AG04449 (cell line): ENCODE measurements at regions of chr1 and their contacts with region 1.

Region 1: DNA sequence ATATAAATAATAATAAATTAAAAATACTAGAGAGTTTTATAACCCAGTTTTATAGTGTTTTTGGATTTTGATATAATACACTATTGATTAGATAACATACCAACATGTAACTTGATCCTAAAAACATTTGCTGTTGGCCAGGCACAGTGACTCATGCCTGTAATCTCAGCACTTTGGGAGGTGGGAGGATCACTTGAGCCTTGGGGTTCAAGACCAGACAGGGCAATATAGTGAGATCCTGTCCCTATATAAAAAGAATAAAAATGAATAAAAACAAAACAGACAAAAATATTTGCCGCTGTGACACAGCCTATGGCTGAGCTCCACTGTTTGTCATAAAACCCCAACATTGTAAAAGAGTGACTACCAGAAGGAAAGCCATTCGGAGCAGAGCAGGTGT is 26.1 kb downstream of the VPS13D start:
- DNase-seq: no peak
- H3K4me3 ChIP-seq: no peak overlapping the region
- CTCF ChIP-seq: no peak

Region 2: GRCh38 chr1:11907275-11908094 is 348.4 kb before region 1 on chr1:
- CTCF ChIA-PET with region 1: no interaction called
- POLR2A ChIA-PET with region 1: no interaction called
- DNase-seq: no peak
- H3K4me3 ChIP-seq: no peak overlapping the region; the same call in 1 of the 2 replicates
- CTCF ChIP-seq: peak; percentile 74

Region 3: DNA sequence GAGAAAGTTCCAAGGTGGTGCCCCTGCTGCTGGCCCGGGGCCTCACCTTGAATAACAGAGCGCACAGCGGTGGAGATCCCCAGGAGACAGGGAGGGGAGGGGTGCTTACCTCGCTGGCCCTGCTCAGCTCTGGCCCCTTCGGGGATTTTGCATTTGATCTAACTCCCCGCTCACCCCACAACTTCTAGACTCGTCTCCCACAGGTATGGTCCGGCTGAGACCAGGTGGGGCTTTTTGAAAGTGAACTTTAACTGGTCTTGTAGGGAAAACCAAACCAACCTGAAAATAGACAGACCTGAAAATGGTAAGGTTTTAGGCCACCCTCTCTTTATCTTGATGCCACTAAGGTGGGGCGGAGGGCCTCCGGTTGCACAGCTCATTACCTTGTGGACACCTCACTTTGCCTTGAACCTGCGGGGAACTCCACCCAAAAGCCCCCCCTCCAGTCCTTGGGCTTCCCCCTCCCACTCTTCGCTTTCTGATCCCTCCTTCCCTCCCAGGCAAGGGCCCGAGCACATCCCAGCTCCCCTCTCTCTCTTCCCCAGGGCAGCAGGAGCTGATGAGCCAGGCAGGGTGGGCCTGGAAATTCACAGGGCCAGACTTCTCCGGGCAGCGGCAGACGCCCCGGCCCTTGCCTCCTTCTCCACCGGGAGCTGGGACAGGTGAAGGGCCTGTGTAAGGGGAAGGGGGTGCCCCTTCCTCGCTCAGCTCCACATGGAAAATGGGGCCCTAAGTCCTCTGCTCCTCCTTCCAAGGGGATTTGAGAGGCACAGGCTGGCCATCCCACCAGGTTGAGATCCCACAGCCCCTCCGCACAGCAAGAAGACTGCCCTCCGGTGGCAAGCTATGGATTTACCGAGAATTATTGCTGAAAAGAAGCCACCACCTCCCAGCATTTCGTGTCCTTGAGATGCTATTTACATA is 176.7 kb before region 1 on chr1:
- CTCF ChIA-PET with region 1: no interaction called
- POLR2A ChIA-PET with region 1: no interaction called
- DNase-seq: no peak
- H3K4me3 ChIP-seq: no peak overlapping the region
- CTCF ChIP-seq: peak; percentile 70

Region 4: GRCh38 chr1:12244078-12244477 is 11.8 kb before region 1 on chr1:
- CTCF ChIA-PET with region 1: interaction called, 14 read pairs
- POLR2A ChIA-PET with region 1: no interaction called
- DNase-seq: no peak
- H3K4me3 ChIP-seq: no peak overlapping the region
- CTCF ChIP-seq: no peak